IMR-90 (cell line): ENCODE measurements at regions of chr13 and their contacts with region 1.

Region 1: GRCh38 chr13:66875264-66875663 is 354.9 kb downstream of the PCDH9 start:
- DNase-seq: no peak
- ATAC-seq: no peak
- H3K4me3 ChIP-seq: no peak overlapping the region
- H3K27ac ChIP-seq: no peak overlapping the region
- H3K4me1 ChIP-seq: no peaks in the 10 kb centered on the region
- H3K27me3 ChIP-seq: no peaks in the 10 kb centered on the region
- CTCF ChIP-seq: no peak
- POLR2A ChIP-seq: no peak
- RAD21 ChIP-seq: no peak

Region 2: DNA sequence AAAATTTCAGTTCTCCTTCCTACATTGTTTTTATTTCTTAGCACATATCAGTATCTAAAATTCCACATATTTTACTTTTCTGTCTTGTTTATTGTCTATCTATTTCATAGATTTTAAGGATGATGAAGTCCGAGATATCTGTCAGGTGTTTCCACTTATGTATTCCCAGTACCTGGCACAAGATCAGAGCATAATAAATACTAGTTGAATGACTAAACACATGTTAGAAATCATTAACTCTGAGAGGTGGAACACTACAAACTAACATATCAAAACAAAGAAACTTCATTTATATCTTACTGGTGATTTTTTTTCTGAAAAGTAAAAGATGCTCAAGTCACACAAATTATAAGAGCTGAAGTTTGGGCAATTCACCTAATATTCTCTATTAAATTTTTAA is 853.4 kb before region 1 on chr13:
- CTCF ChIA-PET with region 1: no interaction called
- POLR2A ChIA-PET with region 1: no interaction called
- dilution Hi-C with region 1: no loop called
- in situ Hi-C with region 1: no loop called
- intact Hi-C with region 1: no loop called
- DNase-seq: no peak
- ATAC-seq: no peak
- H3K4me3 ChIP-seq: no peak overlapping the region
- H3K27ac ChIP-seq: no peak overlapping the region
- H3K4me1 ChIP-seq: no peaks in the 10 kb centered on the region
- H3K27me3 ChIP-seq: no peaks in the 10 kb centered on the region
- CTCF ChIP-seq: no peak
- POLR2A ChIP-seq: no peak
- RAD21 ChIP-seq: no peak

Region 3: DNA sequence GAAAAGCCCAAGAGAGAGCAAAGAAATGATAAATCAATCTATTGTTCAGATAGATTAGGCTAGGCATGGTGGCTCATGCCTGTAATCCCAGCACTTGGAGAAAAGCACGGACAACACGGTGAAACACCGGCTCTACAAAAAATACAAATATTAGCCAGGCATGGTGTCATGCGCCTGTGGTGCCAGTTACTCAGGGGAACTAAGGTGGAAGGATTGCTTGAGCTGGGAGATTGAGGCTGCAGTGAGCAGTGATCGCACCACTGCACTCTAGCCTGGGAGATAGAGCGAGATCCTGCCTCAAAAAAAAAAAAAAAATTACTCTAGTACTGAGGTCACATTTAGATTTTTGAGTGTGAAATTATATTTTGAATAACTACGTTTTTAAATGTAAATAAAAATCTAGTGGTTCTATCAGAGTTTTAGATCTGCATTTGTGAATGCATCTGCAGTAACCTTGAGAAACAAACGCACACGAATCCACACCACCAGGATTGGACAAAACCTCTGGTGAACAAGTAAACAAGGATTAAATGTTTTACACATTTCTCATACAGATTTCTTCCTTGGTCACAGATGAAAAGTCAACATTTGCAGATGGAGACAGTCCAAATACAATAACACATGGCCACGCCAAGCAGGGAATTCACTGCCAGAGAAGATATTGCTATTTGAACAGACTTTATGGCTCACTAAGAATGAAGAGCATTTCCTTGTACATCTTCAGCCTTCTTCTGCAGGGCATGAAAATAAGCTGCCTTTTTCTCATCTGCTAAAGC is 562.8 kb before region 1 on chr13:
- CTCF ChIA-PET with region 1: no interaction called
- POLR2A ChIA-PET with region 1: no interaction called
- dilution Hi-C with region 1: no loop called
- in situ Hi-C with region 1: no loop called
- intact Hi-C with region 1: no loop called
- DNase-seq: peak; percentile 80
- ATAC-seq: peak; percentile 89
- H3K4me3 ChIP-seq: no peak overlapping the region
- H3K27ac ChIP-seq: no peak overlapping the region
- H3K4me1 ChIP-seq: no peaks in the 10 kb centered on the region
- H3K27me3 ChIP-seq: no peaks in the 10 kb centered on the region
- CTCF ChIP-seq: no peak
- POLR2A ChIP-seq: no peak
- RAD21 ChIP-seq: no peak

Region 4: GRCh38 chr13:66888698-66889097 is 13.4 kb after region 1 on chr13:
- CTCF ChIA-PET with region 1: interaction called, 4 read pairs
- POLR2A ChIA-PET with region 1: interaction called, 10 read pairs
- dilution Hi-C with region 1: no loop called
- in situ Hi-C with region 1: no loop called
- intact Hi-C with region 1: no loop called
- DNase-seq: peak; percentile 18
- ATAC-seq: no peak
- H3K4me3 ChIP-seq: no peak overlapping the region
- H3K27ac ChIP-seq: no peak overlapping the region
- H3K4me1 ChIP-seq: no peaks in the 10 kb centered on the region; the same call in 1 of the 2 replicates
- H3K27me3 ChIP-seq: no peaks in the 10 kb centered on the region
- CTCF ChIP-seq: no peak
- POLR2A ChIP-seq: no peak
- RAD21 ChIP-seq: no peak